ENCODE measurements at regions of chr7 and their contacts with region 1.

Region 1: DNA sequence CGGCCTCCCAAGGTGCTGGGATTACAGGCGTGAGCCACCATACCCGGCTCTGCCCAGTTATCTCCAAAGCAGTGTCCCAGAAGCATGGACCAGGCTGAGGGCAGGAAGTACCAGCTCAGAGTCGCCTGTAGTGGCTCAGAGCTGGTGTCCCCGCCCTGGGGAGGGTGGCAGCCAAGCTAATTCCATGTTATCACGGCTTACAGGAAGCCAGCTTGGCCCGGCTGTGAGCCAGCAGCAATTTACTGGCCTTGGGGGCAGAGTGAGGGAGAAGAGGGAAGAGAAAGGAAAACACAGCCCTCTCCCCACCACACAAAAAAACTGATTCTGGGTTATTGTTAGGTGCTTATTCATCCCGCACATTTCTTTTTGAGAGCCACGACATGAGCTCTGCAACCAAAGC is 88.1 kb downstream of the HIP1 start:
- DNase-seq: no peak
- ATAC-seq: no peak
- H3K4me3 Mint-ChIP-seq: no peak overlapping the region
- H3K27ac Mint-ChIP-seq: 0 out of 2 replicates have a peak overlapping the region, but pooled peaks have one; percentile 60
- H3K4me1 Mint-ChIP-seq: peaks cover 14% of the 10 kb centered on the region
- H3K27me3 Mint-ChIP-seq: no peaks in the 10 kb centered on the region
- CTCF ChIP-seq: no peak

Region 2: GRCh38 chr7:75762314-75762917 is 111.7 kb after region 1 on chr7:
- CTCF ChIA-PET with region 1: interaction called, 25 read pairs
- POLR2A ChIA-PET with region 1: interaction called, 3 read pairs
- DNase-seq: no peak
- ATAC-seq: peak; percentile 95
- H3K4me3 Mint-ChIP-seq: no peak overlapping the region
- H3K27ac Mint-ChIP-seq: peak overlapping the region; percentile 22; the same call in 1 of the 2 replicates
- H3K4me1 Mint-ChIP-seq: peaks cover 2% of the 10 kb centered on the region
- H3K27me3 Mint-ChIP-seq: no peaks in the 10 kb centered on the region; the same call in 1 of the 2 replicates
- CTCF ChIP-seq: peak; percentile 40; the same call in 1 of the 2 replicates

Measured in WTC11 (cell line).